Activated T-helper 1 cell treated with anti-CD3 and anti-CD28 coated beads, Interleukin-12 subunit alpha, Interleukin-12 subunit beta, Interleukin-2, Interleukin-4 antibody, amounts not matched to agents 30 ng/mL and 10 ng/mL and 1 ng/mL, durations not matched to agents 14 hours and 24 hours and 36 hours (primary cell): ENCODE measurements at regions of chr1 and their contacts with region 1.

Region 1: DNA sequence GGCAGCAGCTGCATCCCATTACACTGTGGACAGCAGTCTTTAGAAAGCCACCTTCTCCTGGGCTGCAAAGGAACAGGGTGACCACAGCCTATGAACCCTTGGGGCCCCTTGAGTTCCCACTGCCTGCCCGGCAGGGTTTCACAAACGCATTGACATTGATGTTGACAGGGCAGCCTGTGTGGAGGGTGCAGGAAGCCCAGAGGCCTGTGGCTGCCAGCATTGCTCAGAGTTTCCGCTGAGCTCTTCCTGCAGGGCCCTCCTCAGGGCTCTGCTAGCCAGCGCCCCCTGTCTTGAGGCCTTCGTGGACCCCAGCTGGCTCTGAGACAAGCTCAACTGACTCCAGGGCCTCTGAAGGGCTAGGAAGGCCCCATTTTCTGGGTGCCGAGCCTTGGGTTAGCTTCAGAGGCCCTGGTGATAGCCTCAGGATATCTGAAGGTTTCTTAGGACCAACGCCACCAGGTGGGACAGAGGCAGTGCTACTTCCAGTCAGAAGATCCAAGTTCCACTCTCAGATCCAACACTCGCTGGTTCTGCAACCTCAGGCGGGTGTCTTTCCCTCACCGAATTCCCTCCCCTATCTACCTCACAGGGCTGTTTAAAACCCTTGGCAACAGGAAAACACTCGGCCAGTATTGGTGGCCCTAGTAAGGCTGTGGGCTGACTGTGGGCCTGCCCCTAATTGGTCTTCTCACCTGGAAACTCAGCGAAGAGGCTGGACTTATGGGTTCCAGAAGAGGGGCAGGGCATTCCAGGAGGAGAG is 27.2 kb upstream of the EPS8L3 start:
- DNase-seq: peak; percentile 73
- H3K4me3 Mint-ChIP-seq: peak overlapping the region; percentile 61
- H3K27ac Mint-ChIP-seq: peak overlapping the region; percentile 77
- H3K4me1 Mint-ChIP-seq: peaks cover 68% of the 10 kb centered on the region
- H3K27me3 Mint-ChIP-seq: no peaks in the 10 kb centered on the region

Region 2: DNA sequence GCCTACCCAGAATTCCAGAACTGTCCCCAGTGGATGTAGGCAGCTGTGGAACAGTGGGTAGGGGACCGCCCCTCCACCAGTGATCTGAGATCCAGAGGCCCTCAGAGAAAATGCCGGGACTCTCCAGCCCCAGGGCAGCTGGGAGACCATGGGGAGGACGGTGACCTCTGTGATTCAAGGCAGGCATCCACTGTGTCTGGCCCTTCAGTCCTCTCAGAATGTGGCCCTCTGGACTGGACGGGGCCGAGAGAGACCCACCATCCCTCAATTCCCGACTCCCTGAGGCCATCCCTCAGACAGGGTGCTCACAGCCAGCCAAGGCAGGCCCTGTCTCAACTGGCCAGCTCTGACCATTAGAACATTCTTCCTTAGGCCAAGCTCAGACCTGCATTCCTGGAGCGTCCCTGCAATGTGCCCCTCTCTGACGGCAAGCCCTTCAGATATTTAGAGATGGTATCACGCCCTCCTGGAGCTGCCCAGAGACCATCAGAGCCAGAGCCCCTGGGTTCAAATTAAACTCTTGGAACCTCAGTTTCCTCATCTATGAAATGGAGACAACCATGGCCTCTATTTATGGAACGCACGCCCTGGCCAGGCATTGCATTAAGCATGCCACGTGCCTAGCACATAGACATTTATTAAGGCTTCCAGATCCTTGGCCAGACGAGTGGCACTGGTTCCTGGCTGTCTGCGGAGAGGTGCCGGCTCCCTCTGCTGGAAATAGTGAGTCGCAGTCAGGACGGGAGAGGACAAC is 17.6 kb before region 1 on chr1:
- intact Hi-C with region 1: loop called (anchors 1 kb)
- DNase-seq: peak; percentile 65
- H3K4me3 Mint-ChIP-seq: no peak overlapping the region
- H3K27ac Mint-ChIP-seq: peak overlapping the region; percentile 15
- H3K4me1 Mint-ChIP-seq: peaks cover 23% of the 10 kb centered on the region
- H3K27me3 Mint-ChIP-seq: peaks cover 9% of the 10 kb centered on the region

Region 3: GRCh38 chr1:109802901-109803561 is 12.1 kb after region 1 on chr1:
- intact Hi-C with region 1: loop called (anchors 1 kb)
- DNase-seq: no peak
- H3K4me3 Mint-ChIP-seq: peak overlapping the region; percentile 72
- H3K27ac Mint-ChIP-seq: peak overlapping the region; percentile 96
- H3K4me1 Mint-ChIP-seq: peaks cover 87% of the 10 kb centered on the region
- H3K27me3 Mint-ChIP-seq: no peaks in the 10 kb centered on the region

Region 4: DNA sequence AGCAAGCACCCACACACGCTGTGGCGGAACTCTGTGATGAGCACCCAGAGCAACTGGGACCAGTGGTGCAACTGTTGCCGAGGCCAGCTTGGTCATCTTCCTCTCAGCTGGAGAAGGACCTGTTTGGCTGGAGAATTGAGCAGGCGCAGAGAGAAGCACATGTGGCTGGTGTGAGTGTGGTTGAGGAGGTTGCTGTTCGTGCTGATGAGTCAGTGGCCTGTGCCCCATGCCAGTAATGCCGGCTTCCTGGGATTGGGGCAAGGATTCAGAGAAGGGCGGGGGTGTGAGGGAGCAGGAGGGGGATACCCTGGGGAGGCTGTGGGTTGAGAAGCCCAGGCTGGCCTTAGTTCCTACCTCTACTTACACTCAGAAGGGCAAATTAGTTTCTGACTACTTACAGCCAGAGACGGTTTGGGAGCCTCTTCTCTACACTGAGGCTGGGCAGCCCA is 30.3 kb after region 1 on chr1:
- intact Hi-C with region 1: loop called (anchors 1 kb)
- DNase-seq: no peak
- H3K4me3 Mint-ChIP-seq: no peak overlapping the region
- H3K27ac Mint-ChIP-seq: peak overlapping the region; percentile 73
- H3K4me1 Mint-ChIP-seq: peaks cover 60% of the 10 kb centered on the region
- H3K27me3 Mint-ChIP-seq: no peaks in the 10 kb centered on the region

Region 5: GRCh38 chr1:109890115-109890953 is 99.4 kb after region 1 on chr1:
- intact Hi-C with region 1: loop called (anchors 1 kb)
- DNase-seq: no peak
- H3K4me3 Mint-ChIP-seq: peak overlapping the region; percentile 34
- H3K27ac Mint-ChIP-seq: peak overlapping the region; percentile 85
- H3K4me1 Mint-ChIP-seq: peaks cover 13% of the 10 kb centered on the region
- H3K27me3 Mint-ChIP-seq: no peaks in the 10 kb centered on the region

Region 6: GRCh38 chr1:110024613-110025012 is 233.7 kb after region 1 on chr1:
- intact Hi-C with region 1: no loop called
- DNase-seq: no peak
- H3K4me3 Mint-ChIP-seq: no peak overlapping the region
- H3K27ac Mint-ChIP-seq: no peak overlapping the region
- H3K4me1 Mint-ChIP-seq: no peaks in the 10 kb centered on the region
- H3K27me3 Mint-ChIP-seq: no peaks in the 10 kb centered on the region